ENCODE measurements at regions of chr2 and their contacts with region 1.

Region 1: DNA sequence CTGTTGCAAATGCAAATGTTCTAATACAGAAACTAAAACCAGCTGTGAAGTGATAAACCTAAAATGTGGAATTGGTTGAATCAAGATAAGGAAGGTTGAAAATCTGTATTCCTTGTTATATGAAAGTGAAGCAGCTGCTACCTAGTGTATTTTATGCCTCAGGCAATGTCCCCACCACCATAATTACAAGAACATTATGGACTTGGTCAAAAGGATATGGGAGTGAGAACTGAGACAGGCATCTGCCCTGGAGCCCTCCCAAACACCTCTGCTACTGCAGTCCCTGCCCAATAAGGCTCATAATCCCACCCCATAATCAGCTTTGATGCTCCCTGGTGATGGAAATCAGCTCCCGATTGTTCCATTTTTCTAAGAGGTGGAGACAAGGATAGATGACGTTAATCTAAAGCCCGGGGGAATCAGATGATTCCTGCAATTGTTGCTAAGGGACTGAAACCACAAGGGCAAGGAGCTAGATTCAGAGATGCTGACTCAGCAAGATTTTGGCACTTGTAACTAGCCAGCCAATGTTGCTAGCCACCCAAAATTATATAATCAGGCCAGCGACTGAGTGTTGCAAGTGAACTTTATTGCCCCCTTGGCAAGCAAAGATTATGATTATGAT is 69.5 kb downstream of the EVA1A start:
- DNase-seq: no peak
- ATAC-seq: no peak
- H3K4me3 ChIP-seq: no peak overlapping the region
- H3K27ac ChIP-seq: no peak overlapping the region
- H3K4me1 ChIP-seq: no peaks in the 10 kb centered on the region
- H3K27me3 ChIP-seq: no peaks in the 10 kb centered on the region
- CTCF ChIP-seq: no peak

Region 2: DNA sequence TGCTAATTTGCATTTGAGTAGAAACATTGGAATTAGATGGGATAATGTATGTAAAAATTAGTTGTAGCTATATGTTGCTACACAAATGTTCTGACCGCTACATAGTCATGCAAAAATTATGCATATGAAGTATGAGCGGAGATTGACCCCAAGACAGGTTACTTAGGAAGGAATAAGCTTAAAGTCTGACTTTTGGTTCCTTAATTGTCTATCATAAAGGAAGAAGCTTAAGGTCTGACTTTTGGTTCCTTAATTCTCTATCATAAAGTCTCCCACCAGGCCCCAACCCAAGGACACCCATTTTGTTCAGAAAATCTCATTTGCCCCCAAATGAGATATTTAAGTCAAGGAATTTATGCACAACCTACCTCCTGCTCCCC is 37.0 kb before region 1 on chr2:
- CTCF ChIA-PET with region 1: no interaction called
- POLR2A ChIA-PET with region 1: no interaction called
- in situ Hi-C with region 1: no loop called
- intact Hi-C with region 1: loop called (anchors 1 kb)
- DNase-seq: no peak
- ATAC-seq: no peak
- H3K4me3 ChIP-seq: no peak overlapping the region
- H3K27ac ChIP-seq: no peak overlapping the region
- H3K4me1 ChIP-seq: no peaks in the 10 kb centered on the region
- H3K27me3 ChIP-seq: no peaks in the 10 kb centered on the region
- CTCF ChIP-seq: no peak

Region 3: GRCh38 chr2:75480971-75481836 is 10.0 kb before region 1 on chr2:
- CTCF ChIA-PET with region 1: no interaction called
- POLR2A ChIA-PET with region 1: no interaction called
- in situ Hi-C with region 1: no loop called
- intact Hi-C with region 1: no loop called
- DNase-seq: no peak
- ATAC-seq: no peak
- H3K4me3 ChIP-seq: no peak overlapping the region
- H3K27ac ChIP-seq: no peak overlapping the region
- H3K4me1 ChIP-seq: no peaks in the 10 kb centered on the region
- H3K27me3 ChIP-seq: peaks cover 5% of the 10 kb centered on the region
- CTCF ChIP-seq: peak; percentile 39

Region 4: GRCh38 chr2:75844651-75845050 is 353.4 kb after region 1 on chr2:
- CTCF ChIA-PET with region 1: no interaction called
- POLR2A ChIA-PET with region 1: no interaction called
- in situ Hi-C with region 1: no loop called
- intact Hi-C with region 1: no loop called
- DNase-seq: no peak
- ATAC-seq: no peak
- H3K4me3 ChIP-seq: no peak overlapping the region
- H3K27ac ChIP-seq: no peak overlapping the region
- H3K4me1 ChIP-seq: no peaks in the 10 kb centered on the region
- H3K27me3 ChIP-seq: no peaks in the 10 kb centered on the region
- CTCF ChIP-seq: no peak

Region 5: GRCh38 chr2:76256458-76257084 is 765.3 kb after region 1 on chr2:
- CTCF ChIA-PET with region 1: no interaction called
- POLR2A ChIA-PET with region 1: no interaction called
- in situ Hi-C with region 1: no loop called
- intact Hi-C with region 1: no loop called
- DNase-seq: no peak
- ATAC-seq: no peak
- H3K4me3 ChIP-seq: no peak overlapping the region
- H3K27ac ChIP-seq: no peak overlapping the region
- H3K4me1 ChIP-seq: no peaks in the 10 kb centered on the region
- H3K27me3 ChIP-seq: no peaks in the 10 kb centered on the region
- CTCF ChIP-seq: no peak

Measured in Panc1 (cell line).